Endothelial cell of umbilical vein (primary cell): ENCODE measurements at regions of chr2 and their contacts with region 1.

Region 1: GRCh38 chr2:54665436-54665856 is 58.0 kb upstream of the EML6 start:
- DNase-seq: peak; percentile 76
- H3K4me3 ChIP-seq: no peak overlapping the region
- H3K27ac ChIP-seq: no peak overlapping the region
- H3K4me1 ChIP-seq: peaks cover 16% of the 10 kb centered on the region
- H3K27me3 ChIP-seq: no peaks in the 10 kb centered on the region
- CTCF ChIP-seq: peak; percentile 74
- POLR2A ChIP-seq: no peak

Region 2: GRCh38 chr2:54522624-54523281 is 142.7 kb before region 1 on chr2:
- CTCF ChIA-PET with region 1: interaction called, 29 read pairs
- POLR2A ChIA-PET with region 1: no interaction called
- dilution Hi-C with region 1: no loop called
- intact Hi-C with region 1: no loop called
- DNase-seq: peak; percentile 44
- H3K4me3 ChIP-seq: no peak overlapping the region
- H3K27ac ChIP-seq: no peak overlapping the region
- H3K4me1 ChIP-seq: peaks cover 10% of the 10 kb centered on the region
- H3K27me3 ChIP-seq: no peaks in the 10 kb centered on the region
- CTCF ChIP-seq: peak; percentile 48 to 68
- POLR2A ChIP-seq: no peak

Region 3: DNA sequence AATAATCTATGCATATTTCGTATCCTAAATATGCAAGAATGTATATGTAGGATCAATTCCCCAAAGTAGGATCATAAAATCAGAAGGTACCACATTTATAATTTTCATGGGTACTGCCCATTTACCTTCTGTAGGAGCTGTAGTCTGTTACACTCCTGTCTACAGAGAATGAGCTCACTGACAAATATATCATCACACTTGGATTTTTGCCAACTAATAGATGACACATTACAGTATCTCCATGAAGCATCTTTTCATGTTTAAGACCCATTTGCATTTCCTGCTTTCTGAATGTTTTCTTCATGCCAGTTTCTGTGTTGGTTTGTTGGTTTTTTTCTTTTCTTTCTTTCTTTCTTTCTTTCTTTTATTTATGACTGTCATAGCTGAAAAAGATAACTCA is 12.9 kb before region 1 on chr2:
- CTCF ChIA-PET with region 1: interaction called, 25 read pairs
- POLR2A ChIA-PET with region 1: no interaction called
- dilution Hi-C with region 1: no loop called
- intact Hi-C with region 1: no loop called
- DNase-seq: no peak
- H3K4me3 ChIP-seq: no peak overlapping the region
- H3K27ac ChIP-seq: no peak overlapping the region
- H3K4me1 ChIP-seq: no peaks in the 10 kb centered on the region
- H3K27me3 ChIP-seq: no peaks in the 10 kb centered on the region
- CTCF ChIP-seq: no peak
- POLR2A ChIP-seq: no peak

Region 4: DNA sequence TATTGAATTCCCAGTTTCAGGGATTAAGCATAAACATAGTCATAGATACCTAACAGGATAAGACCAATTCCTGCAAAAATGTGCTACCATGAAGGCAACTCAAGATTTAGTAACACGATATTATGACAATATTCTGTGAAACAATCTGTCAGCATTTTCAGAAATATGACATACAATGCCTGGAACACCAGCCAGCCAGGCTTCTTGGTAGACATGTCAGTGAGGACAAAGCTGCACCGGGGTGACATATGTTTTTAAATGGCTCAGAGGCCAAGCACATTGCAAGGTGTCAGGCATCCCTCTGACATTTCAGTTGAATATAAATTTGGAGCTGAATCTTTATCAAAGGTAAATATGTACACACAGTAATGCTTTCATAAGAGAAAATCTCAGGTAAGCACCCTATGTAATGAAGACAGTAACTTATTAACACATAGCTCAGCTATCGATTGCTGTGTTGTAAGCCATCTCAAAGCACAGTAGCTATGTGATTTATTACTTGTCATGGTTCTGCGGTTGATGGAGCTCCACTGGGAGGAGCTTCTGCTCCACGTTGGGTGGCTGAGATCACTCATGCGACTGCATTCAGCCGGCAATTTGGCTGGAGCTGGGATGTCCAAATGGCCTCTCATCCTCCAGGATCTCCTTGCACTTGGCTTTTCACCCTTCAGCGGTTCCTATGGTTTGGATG is 26.1 kb after region 1 on chr2:
- CTCF ChIA-PET with region 1: interaction called, 33 read pairs
- POLR2A ChIA-PET with region 1: no interaction called
- dilution Hi-C with region 1: no loop called
- intact Hi-C with region 1: no loop called
- DNase-seq: no peak
- H3K4me3 ChIP-seq: no peak overlapping the region
- H3K27ac ChIP-seq: no peak overlapping the region
- H3K4me1 ChIP-seq: no peaks in the 10 kb centered on the region
- H3K27me3 ChIP-seq: peaks cover 3 to 4% of the 10 kb centered on the region in 2 experiments
- CTCF ChIP-seq: no peak
- POLR2A ChIP-seq: no peak

Region 5: GRCh38 chr2:54697934-54698333 is 32.5 kb after region 1 on chr2:
- CTCF ChIA-PET with region 1: interaction called, 295 read pairs
- POLR2A ChIA-PET with region 1: no interaction called
- dilution Hi-C with region 1: no loop called
- intact Hi-C with region 1: no loop called
- DNase-seq: no peak
- H3K4me3 ChIP-seq: no peak overlapping the region
- H3K27ac ChIP-seq: no peak overlapping the region
- H3K4me1 ChIP-seq: no peaks in the 10 kb centered on the region
- H3K27me3 ChIP-seq: no peaks in the 10 kb centered on the region
- CTCF ChIP-seq: no peak
- POLR2A ChIP-seq: no peak